Lower leg skin (tissue), 4 donors: ENCODE measurements at regions of chr2 and their contacts with region 1.

Region 1: DNA sequence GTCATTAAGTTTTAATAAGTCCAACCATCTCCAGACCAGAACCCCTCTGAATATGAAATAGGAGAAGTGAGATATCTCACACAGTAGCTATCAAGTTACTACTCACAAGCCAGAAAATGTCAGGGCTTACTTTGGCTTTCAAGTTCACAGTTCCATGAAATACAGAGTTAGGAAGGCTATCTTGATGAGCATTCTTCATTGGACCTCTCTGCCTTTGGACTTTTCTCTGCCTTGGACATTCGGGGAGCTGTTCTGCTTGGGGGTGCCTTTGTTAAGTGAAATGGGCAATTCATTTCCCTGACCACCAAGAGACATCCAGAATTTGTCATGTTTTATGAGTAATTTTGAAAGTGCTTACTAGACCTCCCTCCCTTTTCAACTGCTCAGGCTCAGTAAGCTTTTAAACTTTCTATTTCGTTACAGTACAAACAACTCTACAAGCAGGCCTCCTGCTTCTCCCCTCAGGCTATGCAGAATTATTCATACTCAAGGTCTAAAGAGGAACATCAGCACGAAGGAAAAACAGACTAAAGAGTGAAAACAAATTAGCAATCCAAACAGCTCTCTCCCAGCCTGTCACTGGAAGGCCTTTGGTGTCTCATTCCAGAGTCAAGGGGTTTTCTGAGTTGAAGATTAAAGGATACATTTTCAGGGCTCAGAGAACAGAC is 95.3 kb downstream of the MREG start:
- DNase-seq: no peak
- H3K4me3 ChIP-seq: no peak overlapping the region
- CTCF ChIP-seq: no peak
- POLR2A ChIP-seq: no peak

Region 2: GRCh38 chr2:215460682-215461382 is 457.3 kb before region 1 on chr2:
- intact Hi-C with region 1: loop called (anchors 10 kb)
- DNase-seq: no peak
- H3K4me3 ChIP-seq: no peak overlapping the region
- CTCF ChIP-seq: no peak
- POLR2A ChIP-seq: no peak